ENCODE measurements at regions of chr10 and their contacts with region 1.

Region 1: GRCh38 chr10:88791924-88792323 is 10.6 kb upstream of the LIPM start:
- DNase-seq: peak; percentile 15
- H3K4me3 Mint-ChIP-seq: no peak overlapping the region
- H3K27ac Mint-ChIP-seq: no peak overlapping the region
- H3K4me1 Mint-ChIP-seq: peaks cover 18% of the 10 kb centered on the region
- H3K27me3 Mint-ChIP-seq: peaks cover 7% of the 10 kb centered on the region

Region 2: GRCh38 chr10:88082806-88083596 is 708.9 kb before region 1 on chr10:
- CTCF ChIA-PET with region 1: no interaction called
- POLR2A ChIA-PET with region 1: no interaction called
- intact Hi-C with region 1: no loop called
- DNase-seq: no peak
- H3K4me3 Mint-ChIP-seq: no peak overlapping the region
- H3K27ac Mint-ChIP-seq: no peak overlapping the region
- H3K4me1 Mint-ChIP-seq: no peaks in the 10 kb centered on the region
- H3K27me3 Mint-ChIP-seq: peaks cover 11% of the 10 kb centered on the region

Region 3: GRCh38 chr10:88553116-88553752 is 238.7 kb before region 1 on chr10:
- CTCF ChIA-PET with region 1: no interaction called
- POLR2A ChIA-PET with region 1: no interaction called
- intact Hi-C with region 1: no loop called
- DNase-seq: peak; percentile 49
- H3K4me3 Mint-ChIP-seq: no peak overlapping the region
- H3K27ac Mint-ChIP-seq: no peak overlapping the region
- H3K4me1 Mint-ChIP-seq: no peaks in the 10 kb centered on the region
- H3K27me3 Mint-ChIP-seq: no peaks in the 10 kb centered on the region

Region 4: DNA sequence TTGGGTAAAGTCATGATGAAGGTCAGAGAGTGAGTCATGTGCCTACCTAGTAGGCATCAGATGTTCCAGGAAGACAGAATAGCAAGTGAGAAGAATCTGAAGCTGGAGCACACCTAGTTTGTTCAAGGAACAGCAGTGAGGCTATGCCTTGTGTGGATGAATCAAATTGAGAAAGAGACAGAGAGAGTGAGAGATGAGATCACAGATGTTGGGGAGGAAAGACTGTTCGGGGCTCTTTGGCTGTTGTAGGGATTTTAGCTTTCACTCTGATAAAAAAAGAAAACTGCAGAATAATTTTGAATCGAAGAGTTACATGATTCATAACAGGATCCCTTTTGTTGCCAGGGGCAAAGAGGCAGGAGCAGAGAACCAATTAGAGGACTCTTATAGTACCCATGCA is 121.4 kb before region 1 on chr10:
- CTCF ChIA-PET with region 1: interaction called, 4 read pairs
- POLR2A ChIA-PET with region 1: no interaction called
- intact Hi-C with region 1: loop called (anchors 2 kb)
- DNase-seq: peak; percentile 33
- H3K4me3 Mint-ChIP-seq: no peak overlapping the region
- H3K27ac Mint-ChIP-seq: peak overlapping the region; percentile 21
- H3K4me1 Mint-ChIP-seq: peaks cover 18% of the 10 kb centered on the region
- H3K27me3 Mint-ChIP-seq: peaks cover 7% of the 10 kb centered on the region

Region 5: GRCh38 chr10:88707429-88708285 is 84.3 kb before region 1 on chr10:
- CTCF ChIA-PET with region 1: no interaction called
- POLR2A ChIA-PET with region 1: no interaction called
- intact Hi-C with region 1: loop called (anchors 2 kb)
- DNase-seq: no peak
- H3K4me3 Mint-ChIP-seq: no peak overlapping the region
- H3K27ac Mint-ChIP-seq: no peak overlapping the region
- H3K4me1 Mint-ChIP-seq: peaks cover 14% of the 10 kb centered on the region
- H3K27me3 Mint-ChIP-seq: peaks cover 4% of the 10 kb centered on the region

Region 6: GRCh38 chr10:88820748-88821389 is 28.9 kb after region 1 on chr10:
- CTCF ChIA-PET with region 1: no interaction called
- POLR2A ChIA-PET with region 1: no interaction called
- intact Hi-C with region 1: loop called (anchors 2 kb)
- DNase-seq: no peak
- H3K4me3 Mint-ChIP-seq: no peak overlapping the region
- H3K27ac Mint-ChIP-seq: no peak overlapping the region
- H3K4me1 Mint-ChIP-seq: peaks cover 20% of the 10 kb centered on the region
- H3K27me3 Mint-ChIP-seq: no peaks in the 10 kb centered on the region

Region 7: GRCh38 chr10:88979153-88979562 is 187.2 kb after region 1 on chr10:
- CTCF ChIA-PET with region 1: no interaction called
- POLR2A ChIA-PET with region 1: no interaction called
- intact Hi-C with region 1: no loop called
- DNase-seq: no peak
- H3K4me3 Mint-ChIP-seq: no peak overlapping the region
- H3K27ac Mint-ChIP-seq: no peak overlapping the region
- H3K4me1 Mint-ChIP-seq: peaks cover 32% of the 10 kb centered on the region
- H3K27me3 Mint-ChIP-seq: no peaks in the 10 kb centered on the region